AG04450 (cell line): ENCODE measurements at regions of chr4 and their contacts with region 1.

Region 1: DNA sequence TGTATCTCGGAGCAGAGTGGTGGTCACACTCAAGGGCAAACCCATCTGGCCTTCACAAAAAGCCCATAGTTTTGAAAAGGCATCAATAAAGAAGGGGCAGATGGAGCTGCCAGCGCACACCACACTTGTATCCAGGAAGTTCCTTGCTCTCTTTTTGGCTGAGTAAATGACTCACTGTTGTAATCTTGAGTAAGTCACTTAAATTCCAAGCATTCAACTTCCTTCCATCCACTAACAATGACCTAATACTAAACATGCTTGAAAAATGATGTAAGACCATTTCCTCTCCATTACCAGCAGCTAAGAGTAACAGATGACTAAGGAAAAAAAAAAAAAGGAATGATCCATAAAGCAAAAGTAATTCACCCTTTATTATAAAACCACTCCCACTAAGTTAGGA is 32.4 kb upstream of the MYOZ2 start:
- DNase-seq: peak; percentile 94
- H3K4me3 ChIP-seq: no peak overlapping the region
- H3K27ac ChIP-seq: peak overlapping the region; percentile 85
- H3K27me3 ChIP-seq: no peaks in the 10 kb centered on the region
- CTCF ChIP-seq: no peak

Region 2: DNA sequence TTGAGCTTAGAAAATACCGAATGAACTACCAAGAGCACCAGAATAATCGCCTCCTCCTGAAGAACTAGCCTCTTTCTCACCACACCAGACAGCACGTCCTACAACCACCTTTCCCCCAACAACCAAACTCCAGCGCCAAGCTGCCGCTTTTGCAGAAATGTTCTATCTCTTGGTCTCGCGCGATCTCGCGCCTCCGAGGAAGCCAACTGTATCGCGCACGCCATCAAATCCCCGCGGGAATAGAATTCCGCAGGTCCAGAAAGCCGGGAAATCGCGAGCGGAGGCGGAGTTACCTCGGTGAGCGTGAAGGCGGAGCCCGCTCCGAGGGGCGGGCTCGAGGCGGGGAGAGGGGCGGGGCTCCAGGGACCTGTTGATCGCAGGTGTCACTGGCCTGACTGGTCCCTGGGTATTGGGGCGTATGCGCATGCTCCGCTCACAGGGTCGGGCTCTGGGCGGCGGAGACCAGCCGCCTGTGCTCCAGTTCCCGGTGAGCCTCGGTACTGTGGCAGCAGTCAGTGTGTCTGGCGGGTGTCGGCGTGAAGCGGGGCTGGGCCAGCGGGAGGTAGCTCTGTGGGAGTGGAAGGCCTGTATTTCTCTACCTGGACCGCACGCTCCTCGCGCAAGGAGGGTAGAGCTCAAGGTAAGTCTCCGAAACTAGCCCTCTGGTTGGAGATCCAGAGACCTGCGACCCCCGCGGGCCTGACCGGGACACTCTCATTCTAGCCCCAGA is 109.1 kb after region 1 on chr4 and contains the start of gene USP53:
- CTCF ChIA-PET with region 1: interaction called, 3 read pairs
- POLR2A ChIA-PET with region 1: interaction called, 14 read pairs
- DNase-seq: peak; percentile 92
- H3K4me3 ChIP-seq: peak within 1 kb of the TSS; percentile 81
- H3K27ac ChIP-seq: peak within 1 kb of the TSS; percentile 79
- H3K27me3 ChIP-seq: no peaks in the 10 kb centered on the region
- CTCF ChIP-seq: no peak
- polyA plus RNA-seq, gene USP53: 15.6 and 19.0 TPM in 2 replicates

Region 3: GRCh38 chr4:119498527-119498926 is 395.3 kb after region 1 on chr4:
- CTCF ChIA-PET with region 1: no interaction called
- POLR2A ChIA-PET with region 1: no interaction called
- DNase-seq: no peak
- H3K4me3 ChIP-seq: no peak overlapping the region
- H3K27ac ChIP-seq: no peak overlapping the region
- H3K27me3 ChIP-seq: no peaks in the 10 kb centered on the region
- CTCF ChIP-seq: no peak